Caco-2 (cell line): ENCODE measurements at regions of chr6 and their contacts with region 1.

Region 1: DNA sequence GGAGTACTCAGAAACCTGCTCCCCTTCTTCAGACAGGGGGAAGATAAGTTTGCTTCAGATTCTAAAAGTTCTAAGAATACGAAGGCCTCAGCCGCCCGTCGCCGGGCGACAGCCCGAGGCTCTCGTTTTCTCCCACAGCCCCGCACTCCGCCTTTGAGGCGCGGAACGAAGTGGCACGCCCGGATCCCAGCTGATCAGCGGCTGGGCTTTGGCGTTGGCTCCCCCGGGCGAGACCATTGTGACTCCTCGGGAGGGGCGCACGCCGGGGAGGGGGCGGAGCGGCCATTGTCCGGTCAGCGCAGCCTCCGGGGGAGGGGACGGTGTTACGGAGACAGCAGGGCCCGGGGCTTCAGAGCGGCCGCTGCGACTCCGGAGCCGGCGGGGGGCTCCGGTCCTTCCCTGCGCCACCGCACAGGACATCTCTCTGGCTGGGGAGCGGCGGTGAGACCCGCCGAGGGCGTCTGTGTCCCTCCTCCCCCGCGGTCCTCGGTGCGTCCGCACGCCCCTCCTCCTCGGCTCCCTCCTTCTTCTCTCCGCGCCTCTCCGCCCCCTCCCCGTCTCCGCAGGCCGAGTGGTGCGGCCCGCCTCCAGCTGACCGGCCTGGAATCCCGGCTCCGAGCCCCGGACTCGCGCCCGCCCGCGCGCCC is at the start of gene ZFAND3:
- DNase-seq: peak; percentile 96 to 98
- H3K4me3 ChIP-seq: peak within 1 kb of the TSS; percentile 74
- H3K4me3 Mint-ChIP-seq: peak within 1 kb of the TSS; percentile 99
- H3K27ac Mint-ChIP-seq: peak within 1 kb of the TSS; percentile 99
- H3K4me1 ChIP-seq: peaks cover 41% of the 10 kb centered on the region
- H3K4me1 Mint-ChIP-seq: peaks cover 29% of the 10 kb centered on the region
- H3K27me3 ChIP-seq: no peaks in the 10 kb centered on the region
- H3K27me3 Mint-ChIP-seq: no peaks in the 10 kb centered on the region
- CTCF ChIP-seq: no peak
- total RNA-seq, gene ZFAND3: 91.1 and 107 TPM in 2 replicates

Region 2: GRCh38 chr6:37806213-37806612 is 13.1 kb before region 1 on chr6:
- CTCF ChIA-PET with region 1: no interaction called
- POLR2A ChIA-PET with region 1: interaction called, 10 read pairs
- intact Hi-C with region 1: no loop called
- DNase-seq: no peak
- H3K4me3 ChIP-seq: no peak overlapping the region
- H3K4me3 Mint-ChIP-seq: no peak overlapping the region
- H3K27ac Mint-ChIP-seq: no peak overlapping the region
- H3K4me1 ChIP-seq: peaks cover 4% of the 10 kb centered on the region; the same call in 1 of the 2 replicates
- H3K4me1 Mint-ChIP-seq: peaks cover 19% of the 10 kb centered on the region
- H3K27me3 ChIP-seq: no peaks in the 10 kb centered on the region
- H3K27me3 Mint-ChIP-seq: no peaks in the 10 kb centered on the region
- CTCF ChIP-seq: no peak

Region 3: DNA sequence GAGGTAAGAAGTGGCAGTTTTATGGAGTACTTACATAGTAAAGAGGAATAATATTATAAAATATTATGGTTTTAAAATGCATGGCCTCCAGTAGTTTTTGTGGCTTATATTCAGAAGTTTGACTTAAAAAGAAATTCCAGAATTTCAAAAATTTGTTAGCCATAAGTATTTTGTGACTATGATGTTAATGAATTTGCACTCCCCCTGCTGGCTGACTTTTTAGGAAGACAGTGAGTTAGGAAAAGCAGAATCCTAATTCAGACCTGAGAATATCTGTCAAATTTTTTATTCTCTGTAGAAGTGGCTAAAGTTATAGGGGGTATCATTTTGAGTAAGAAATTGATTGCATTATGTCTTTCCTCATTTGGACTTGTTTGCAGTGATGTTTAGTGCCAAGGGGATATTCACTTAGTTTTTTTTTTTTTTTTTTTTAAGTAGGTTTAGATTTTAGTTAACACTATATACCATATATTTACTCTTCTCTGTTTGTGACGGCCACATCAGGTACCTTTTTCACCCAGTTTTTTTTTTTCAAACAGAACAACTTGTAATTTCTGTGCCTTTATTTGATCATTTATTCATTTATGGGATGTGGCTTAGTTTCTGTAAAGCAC is 41.0 kb after region 1 on chr6:
- CTCF ChIA-PET with region 1: interaction called, 5 read pairs
- POLR2A ChIA-PET with region 1: no interaction called
- intact Hi-C with region 1: loop called (anchors 5 kb)
- DNase-seq: peak in 1 of 2 experiments; percentile 55
- H3K4me3 ChIP-seq: no peak overlapping the region
- H3K4me3 Mint-ChIP-seq: no peak overlapping the region
- H3K27ac Mint-ChIP-seq: no peak overlapping the region
- H3K4me1 ChIP-seq: no peaks in the 10 kb centered on the region; the same call in 1 of the 2 replicates
- H3K4me1 Mint-ChIP-seq: peaks cover 2% of the 10 kb centered on the region
- H3K27me3 ChIP-seq: no peaks in the 10 kb centered on the region
- H3K27me3 Mint-ChIP-seq: no peaks in the 10 kb centered on the region
- CTCF ChIP-seq: peak; percentile 49 to 54